Breast epithelium (tissue), 4 donors: ENCODE measurements at regions of chr12 and their contacts with region 1.

Region 1: GRCh38 chr12:52546126-52546525 is 6.8 kb downstream of the KRT71 start:
- DNase-seq: no peak
- H3K4me3 ChIP-seq: no peak overlapping the region
- H3K27ac ChIP-seq: no peak overlapping the region
- H3K4me1 ChIP-seq: peaks cover 0 to 10% of the 10 kb centered on the region in 2 donors
- H3K27me3 ChIP-seq: no peaks in the 10 kb centered on the region
- CTCF ChIP-seq: no peak
- POLR2A ChIP-seq: no peak

Region 2: GRCh38 chr12:52495389-52495788 is 50.7 kb before region 1 on chr12:
- intact Hi-C with region 1: no loop called
- DNase-seq: no peak
- H3K4me3 ChIP-seq: no peak overlapping the region
- H3K27ac ChIP-seq: peak overlapping the region; percentile 74 to 84
- H3K4me1 ChIP-seq: peaks cover 4 to 28% of the 10 kb centered on the region in 2 donors
- H3K27me3 ChIP-seq: peaks cover 0 to 5% of the 10 kb centered on the region in 2 donors
- CTCF ChIP-seq: no peak
- POLR2A ChIP-seq: no peak

Region 3: DNA sequence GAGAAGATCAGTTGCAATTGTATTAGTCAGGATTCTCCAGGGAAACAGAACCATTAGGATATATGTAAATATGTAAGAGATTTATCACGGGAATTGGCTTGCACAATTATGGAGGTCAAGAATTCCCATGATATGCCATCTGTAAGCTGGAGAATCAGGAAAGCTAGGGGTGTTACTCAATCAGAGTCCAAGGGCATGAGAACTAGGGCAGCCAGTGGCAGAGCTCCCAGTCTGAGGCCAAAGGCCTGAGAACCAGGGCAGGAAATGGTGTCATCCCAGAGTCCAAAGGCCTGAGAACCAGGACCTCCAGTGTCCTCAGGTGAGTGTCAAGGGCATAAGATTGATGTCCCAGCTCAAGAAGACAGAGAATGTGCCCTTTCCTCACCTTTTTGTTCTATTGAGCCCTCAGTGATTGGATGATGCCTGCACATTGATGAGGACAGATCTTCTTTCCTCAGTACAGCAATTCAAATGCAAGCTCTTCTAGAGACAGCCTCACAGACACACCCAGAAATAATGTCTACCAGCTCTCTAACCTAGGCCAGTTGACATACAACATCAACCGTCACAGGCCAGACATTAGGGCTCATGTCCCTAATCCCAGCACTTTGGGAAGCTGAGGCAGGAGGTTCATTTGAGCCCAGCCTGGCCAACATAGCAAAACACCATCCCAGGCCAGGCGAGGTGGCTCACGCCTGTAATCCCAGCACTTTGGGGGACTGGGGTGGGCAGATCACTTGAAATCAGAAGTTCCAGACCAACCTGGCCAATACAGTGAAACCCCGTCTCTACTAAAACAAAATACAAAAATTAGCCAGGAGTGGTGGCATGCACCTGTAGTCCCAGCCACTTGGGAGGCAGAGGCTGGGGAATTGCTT is 599.5 kb after region 1 on chr12:
- intact Hi-C with region 1: no loop called
- DNase-seq: no peak
- H3K4me3 ChIP-seq: no peak overlapping the region
- H3K27ac ChIP-seq: no peak overlapping the region
- H3K4me1 ChIP-seq: no peaks in the 10 kb centered on the region
- H3K27me3 ChIP-seq: no peaks in the 10 kb centered on the region
- CTCF ChIP-seq: no peak
- POLR2A ChIP-seq: no peak

Region 4: DNA sequence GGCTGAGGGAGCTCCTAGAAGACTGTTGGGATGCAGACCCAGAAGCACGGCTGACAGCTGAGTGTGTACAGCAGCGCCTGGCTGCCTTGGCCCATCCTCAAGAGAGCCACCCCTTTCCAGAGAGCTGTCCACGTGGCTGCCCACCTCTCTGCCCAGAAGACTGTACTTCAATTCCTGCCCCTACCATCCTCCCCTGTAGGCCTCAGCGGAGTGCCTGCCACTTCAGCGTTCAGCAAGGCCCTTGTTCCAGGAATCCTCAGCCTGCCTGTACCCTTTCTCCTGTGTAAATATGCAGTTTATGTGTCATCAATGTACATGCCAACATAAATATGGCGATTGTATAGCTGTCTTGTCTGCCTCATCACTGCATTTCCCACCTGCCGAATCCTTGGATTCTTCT is 885.1 kb after region 1 on chr12:
- intact Hi-C with region 1: loop called (anchors 5 kb)
- DNase-seq: no peak
- H3K4me3 ChIP-seq: no peak overlapping the region
- H3K27ac ChIP-seq: no peak overlapping the region
- H3K4me1 ChIP-seq: no peaks in the 10 kb centered on the region
- H3K27me3 ChIP-seq: no peaks in the 10 kb centered on the region
- CTCF ChIP-seq: no peak
- POLR2A ChIP-seq: no peak